Left cardiac atrium (tissue), 4 donors: ENCODE measurements at regions of chr10 and their contacts with region 1.

Region 1: GRCh38 chr10:112314822-112315474 is 31.7 kb downstream of the TECTB start:
- DNase-seq: peak; percentile 85
- ATAC-seq: peak; percentile 81 to 86

Region 2: GRCh38 chr10:111756217-111757061 is 558.5 kb before region 1 on chr10:
- intact Hi-C with region 1: loop called in 1 of 2 experiments (anchors 10 kb)
- DNase-seq: peak; percentile 18
- ATAC-seq: peak in 1 of 2 donors; percentile 51

Region 3: DNA sequence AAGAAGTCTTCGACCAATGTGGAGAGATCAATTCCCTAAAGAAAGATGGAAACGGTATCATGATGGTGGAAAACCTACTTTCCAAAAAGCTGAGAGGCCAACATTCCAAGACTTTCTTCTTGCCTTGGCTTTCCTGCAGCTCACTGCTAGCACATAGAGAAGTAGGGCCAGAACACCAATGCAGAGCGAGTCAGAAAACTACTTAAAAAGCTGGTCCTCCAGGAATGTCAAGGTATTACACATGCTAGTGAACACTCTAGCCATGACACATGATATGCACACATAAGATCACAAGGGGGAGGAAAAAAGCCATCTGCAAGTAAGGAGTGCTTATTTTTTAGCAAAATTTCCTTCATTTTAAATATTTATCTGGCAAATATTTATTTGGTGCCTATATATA is 154.1 kb before region 1 on chr10:
- intact Hi-C with region 1: loop called in 1 of 2 experiments (anchors 10 kb)
- DNase-seq: no peak
- ATAC-seq: no peak

Region 4: GRCh38 chr10:112429147-112429546 is 114.2 kb after region 1 on chr10:
- intact Hi-C with region 1: loop called (anchors 5 to 10 kb)
- DNase-seq: no peak
- ATAC-seq: no peak

Region 5: GRCh38 chr10:112434988-112435619 is 120.2 kb after region 1 on chr10:
- intact Hi-C with region 1: loop called in 1 of 2 experiments (anchors 5 kb)
- DNase-seq: no peak
- ATAC-seq: no peak

Region 6: DNA sequence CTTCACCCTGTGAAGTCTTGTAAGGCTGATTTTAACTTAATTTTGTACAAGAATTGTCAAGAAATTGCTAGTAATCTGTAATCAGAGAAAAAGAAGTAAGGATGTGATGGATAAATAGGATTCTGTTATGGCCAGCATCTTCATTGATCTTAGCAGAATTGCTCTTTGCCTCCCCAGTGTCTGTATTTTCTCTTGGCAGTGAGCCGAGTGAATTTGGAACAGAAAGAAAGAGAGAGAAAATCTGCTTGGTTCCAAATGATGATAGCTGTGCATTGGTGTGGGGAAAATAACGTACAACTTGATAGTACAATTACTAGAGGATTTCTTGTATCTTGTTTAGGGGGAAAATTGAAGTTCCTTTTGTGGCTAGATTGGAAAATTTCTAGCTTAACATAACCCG is 166.7 kb after region 1 on chr10:
- intact Hi-C with region 1: no loop called
- DNase-seq: no peak
- ATAC-seq: no peak